Naive thymus-derived CD4-positive, alpha-beta T cell (primary cell): ENCODE measurements at regions of chr7 and their contacts with region 1.

Region 1: DNA sequence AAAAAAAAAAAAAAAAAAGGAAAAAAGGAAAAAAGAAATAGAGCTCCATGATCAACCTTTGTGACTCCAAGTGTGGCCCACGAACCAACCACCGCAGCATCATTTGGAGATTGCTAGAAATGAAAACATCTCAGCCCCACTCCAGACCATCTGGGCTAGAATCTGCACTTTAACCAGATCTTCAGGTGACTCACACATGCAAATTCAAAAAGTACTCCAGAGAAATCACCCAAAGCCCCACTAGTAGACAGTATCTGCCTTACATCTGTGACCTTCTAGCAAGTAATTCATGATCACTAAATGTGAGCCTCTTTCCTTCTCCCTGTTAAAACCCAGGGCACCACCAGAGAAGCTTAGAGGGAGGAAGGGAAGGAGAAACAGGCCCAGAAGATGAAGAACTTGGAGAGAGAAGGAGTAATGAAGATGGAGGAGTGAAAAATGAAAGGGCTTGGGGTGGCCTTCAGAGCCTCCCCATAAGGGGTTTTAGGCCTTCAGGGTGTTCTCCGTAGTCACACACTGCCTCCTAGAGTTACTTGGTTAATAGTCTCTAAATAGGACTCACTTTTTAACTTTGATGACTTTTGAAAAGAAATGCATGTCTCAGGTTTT is 94.0 kb downstream of the SLC37A3 start:
- DNase-seq: peak in 8 of 9 donors; percentile 30 to 75 (median 58)
- ATAC-seq: peak; percentile 93
- H3K4me3 ChIP-seq: no peak overlapping the region
- H3K4me3 Mint-ChIP-seq: peak overlapping the region in 1 of 10 donors; percentile 12
- H3K27ac ChIP-seq: no peak overlapping the region
- H3K27ac Mint-ChIP-seq: peak overlapping the region; percentile 3 to 81 (median 62)
- H3K4me1 ChIP-seq: no peaks in the 10 kb centered on the region
- H3K4me1 Mint-ChIP-seq: peaks cover 0 to 7% (median 6%) of the 10 kb centered on the region in 7 donors
- H3K27me3 ChIP-seq: no peaks in the 10 kb centered on the region
- H3K27me3 Mint-ChIP-seq: no peaks in the 10 kb centered on the region

Region 2: DNA sequence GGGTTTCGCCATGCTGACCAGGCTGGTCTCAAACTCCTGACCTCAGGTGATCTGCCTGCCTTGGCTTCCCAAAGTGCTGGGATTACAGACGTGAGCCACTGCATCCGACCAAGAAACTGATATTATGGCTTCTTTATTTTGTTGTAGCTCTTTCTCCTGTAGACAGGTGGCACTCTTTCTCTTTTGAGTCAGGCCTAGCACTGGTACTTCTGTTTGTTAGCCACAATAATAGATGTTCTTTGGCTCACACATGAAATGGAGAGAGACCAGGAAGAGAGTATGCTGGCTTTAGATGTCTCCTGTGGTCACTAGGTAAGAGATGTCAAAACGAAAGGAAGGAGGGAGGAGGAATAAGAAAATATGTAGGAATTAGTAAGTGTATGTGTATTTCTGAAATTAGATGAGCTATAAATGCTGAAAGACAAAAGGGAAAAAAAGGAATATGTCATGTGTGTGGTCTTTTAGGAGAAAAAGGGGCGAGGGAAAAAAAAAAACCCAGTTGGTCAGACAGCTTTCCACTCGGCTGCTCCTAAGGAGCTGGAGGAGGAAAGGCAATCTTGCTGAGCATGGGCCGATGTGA is 702.1 kb before region 1 on chr7:
- CTCF ChIA-PET with region 1: no interaction called
- POLR2A ChIA-PET with region 1: no interaction called
- intact Hi-C with region 1: loop called in 1 of 2 experiments (anchors 1 kb)
- DNase-seq: peak in 6 of 9 donors; percentile 16 to 46 (median 44)
- ATAC-seq: peak; percentile 73
- H3K4me3 ChIP-seq: no peak overlapping the region
- H3K4me3 Mint-ChIP-seq: no peak overlapping the region
- H3K27ac ChIP-seq: no peak overlapping the region
- H3K27ac Mint-ChIP-seq: no peak overlapping the region
- H3K4me1 ChIP-seq: no peaks in the 10 kb centered on the region
- H3K4me1 Mint-ChIP-seq: peaks cover 0 to 3% (median 0%) of the 10 kb centered on the region in 7 donors
- H3K27me3 ChIP-seq: no peaks in the 10 kb centered on the region
- H3K27me3 Mint-ChIP-seq: no peaks in the 10 kb centered on the region

Region 3: GRCh38 chr7:140036224-140036962 is 267.9 kb before region 1 on chr7:
- CTCF ChIA-PET with region 1: no interaction called
- POLR2A ChIA-PET with region 1: no interaction called
- intact Hi-C with region 1: no loop called
- DNase-seq: no peak
- ATAC-seq: peak; percentile 45
- H3K4me3 ChIP-seq: no peak overlapping the region
- H3K4me3 Mint-ChIP-seq: peak overlapping the region in 6 of 10 donors; percentile 5 to 52 (median 42)
- H3K27ac ChIP-seq: no peak overlapping the region
- H3K27ac Mint-ChIP-seq: peak overlapping the region in 6 of 9 donors; percentile 2 to 71 (median 51)
- H3K4me1 ChIP-seq: peaks cover 5% of the 10 kb centered on the region in 2 donors
- H3K4me1 Mint-ChIP-seq: peaks cover 13 to 65% (median 35%) of the 10 kb centered on the region in 7 donors
- H3K27me3 ChIP-seq: no peaks in the 10 kb centered on the region
- H3K27me3 Mint-ChIP-seq: no peaks in the 10 kb centered on the region

Region 4: GRCh38 chr7:140238778-140239652 is 65.3 kb before region 1 on chr7:
- CTCF ChIA-PET with region 1: interaction called, 3 read pairs
- POLR2A ChIA-PET with region 1: interaction called, 3 read pairs
- intact Hi-C with region 1: loop called in 1 of 2 experiments (anchors 1 kb)
- DNase-seq: no peak
- ATAC-seq: no peak
- H3K4me3 ChIP-seq: no peak overlapping the region
- H3K4me3 Mint-ChIP-seq: no peak overlapping the region
- H3K27ac ChIP-seq: no peak overlapping the region
- H3K27ac Mint-ChIP-seq: peak overlapping the region in 1 of 9 donors; percentile 41
- H3K4me1 ChIP-seq: no peaks in the 10 kb centered on the region
- H3K4me1 Mint-ChIP-seq: peaks cover 0 to 25% (median 13%) of the 10 kb centered on the region in 7 donors
- H3K27me3 ChIP-seq: no peaks in the 10 kb centered on the region
- H3K27me3 Mint-ChIP-seq: no peaks in the 10 kb centered on the region

Region 5: DNA sequence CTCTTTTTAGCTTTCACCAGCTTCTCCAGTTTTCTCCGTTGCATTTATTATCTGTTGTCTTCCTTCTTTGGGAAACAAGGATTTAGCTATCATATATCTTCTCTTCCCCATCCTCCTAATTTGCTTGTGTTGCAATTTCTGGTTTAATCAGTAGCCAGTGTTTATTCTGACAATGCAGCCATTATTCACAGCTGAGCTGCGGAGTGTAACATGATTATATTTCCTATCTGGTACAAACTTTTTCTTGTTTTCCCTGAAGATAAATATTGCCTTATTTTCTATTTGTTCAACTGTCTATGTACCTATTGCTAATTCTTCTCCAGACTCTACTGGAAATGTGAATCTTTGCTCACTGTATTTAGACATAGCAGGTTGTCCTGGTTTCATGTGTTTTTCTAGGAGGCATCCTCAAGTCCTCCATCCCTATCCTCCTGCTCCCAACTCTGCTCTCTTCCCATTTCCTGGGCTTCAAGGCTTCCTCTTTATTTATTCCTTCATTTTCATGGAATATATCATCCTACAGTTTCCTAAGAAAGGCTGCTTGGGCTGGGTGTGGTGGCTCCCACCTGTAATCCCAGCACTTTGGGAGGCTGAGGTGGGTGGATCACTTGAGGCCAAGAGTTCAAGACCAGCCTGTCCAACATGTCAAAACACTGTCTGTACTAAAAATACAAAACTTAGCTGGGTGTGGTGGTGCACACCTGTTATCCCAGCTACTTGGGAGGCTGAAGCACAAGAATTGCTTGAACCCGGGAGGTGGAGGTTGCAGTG is 55.1 kb before region 1 on chr7:
- CTCF ChIA-PET with region 1: no interaction called
- POLR2A ChIA-PET with region 1: no interaction called
- intact Hi-C with region 1: loop called in 1 of 2 experiments (anchors 5 kb)
- DNase-seq: no peak
- ATAC-seq: no peak
- H3K4me3 ChIP-seq: no peak overlapping the region
- H3K4me3 Mint-ChIP-seq: no peak overlapping the region
- H3K27ac ChIP-seq: no peak overlapping the region
- H3K27ac Mint-ChIP-seq: no peak overlapping the region
- H3K4me1 ChIP-seq: peaks cover 0 to 21% of the 10 kb centered on the region in 2 donors
- H3K4me1 Mint-ChIP-seq: peaks cover 0 to 34% (median 5%) of the 10 kb centered on the region in 7 donors
- H3K27me3 ChIP-seq: no peaks in the 10 kb centered on the region
- H3K27me3 Mint-ChIP-seq: no peaks in the 10 kb centered on the region

Region 6: GRCh38 chr7:140260352-140261104 is 43.8 kb before region 1 on chr7:
- CTCF ChIA-PET with region 1: interaction called, 7 read pairs
- POLR2A ChIA-PET with region 1: interaction called, 5 read pairs
- intact Hi-C with region 1: loop called in 1 of 2 experiments (anchors 5 kb)
- DNase-seq: no peak
- ATAC-seq: no peak
- H3K4me3 ChIP-seq: no peak overlapping the region
- H3K4me3 Mint-ChIP-seq: peak overlapping the region in 1 of 10 donors; percentile 7
- H3K27ac ChIP-seq: no peak overlapping the region
- H3K27ac Mint-ChIP-seq: peak overlapping the region in 5 of 9 donors; percentile 41 to 89 (median 74)
- H3K4me1 ChIP-seq: peaks cover 18 to 29% of the 10 kb centered on the region in 2 donors
- H3K4me1 Mint-ChIP-seq: peaks cover 29 to 58% (median 47%) of the 10 kb centered on the region in 7 donors
- H3K27me3 ChIP-seq: no peaks in the 10 kb centered on the region
- H3K27me3 Mint-ChIP-seq: peaks cover 0 to 4% (median 0%) of the 10 kb centered on the region in 5 donors

Region 7: DNA sequence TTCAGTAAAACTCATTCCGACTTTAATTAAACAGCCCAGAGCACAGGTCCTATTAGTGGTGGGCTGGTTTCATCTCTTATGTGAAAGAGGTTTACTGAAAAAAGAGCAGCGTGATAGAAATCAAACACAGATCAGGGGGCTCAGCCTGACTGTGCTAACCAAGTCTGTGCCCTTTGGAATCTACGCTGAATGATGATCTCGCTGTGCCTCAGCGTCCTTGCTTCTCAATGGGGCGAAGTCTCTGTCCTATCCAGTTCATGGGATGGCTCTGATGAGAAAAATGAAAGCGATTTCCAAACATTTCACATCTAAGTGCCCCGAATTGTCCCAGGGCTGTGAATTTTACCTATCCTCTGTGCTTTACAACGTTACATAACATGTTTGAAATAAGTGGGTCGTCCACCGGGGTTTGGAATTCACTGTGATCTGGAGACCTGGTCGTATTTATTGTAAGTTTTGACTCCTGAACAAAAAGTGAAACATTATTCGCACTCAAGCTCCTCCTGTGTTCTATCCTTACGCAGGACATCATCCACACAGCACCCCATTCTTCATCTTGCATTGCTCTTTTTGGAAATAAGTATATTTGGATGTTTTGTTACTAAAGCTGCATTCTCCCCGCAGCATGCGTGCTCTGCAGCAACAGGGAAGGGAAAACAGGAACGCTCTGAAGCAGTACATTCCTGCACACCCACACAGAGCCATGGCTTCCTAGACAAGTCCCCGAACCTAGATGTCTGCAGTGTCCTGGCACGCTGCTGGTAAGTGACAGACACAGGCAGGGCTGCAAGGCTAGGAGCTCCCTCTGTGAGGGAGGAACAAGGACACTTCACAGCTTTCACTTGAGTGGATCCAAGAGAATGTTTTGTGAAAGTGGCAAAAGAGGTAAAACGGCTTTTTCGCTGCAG is 10.5 kb after region 1 on chr7:
- CTCF ChIA-PET with region 1: no interaction called
- POLR2A ChIA-PET with region 1: no interaction called
- intact Hi-C with region 1: no loop called
- DNase-seq: no peak
- ATAC-seq: no peak
- H3K4me3 ChIP-seq: no peak overlapping the region
- H3K4me3 Mint-ChIP-seq: no peak overlapping the region
- H3K27ac ChIP-seq: no peak overlapping the region
- H3K27ac Mint-ChIP-seq: peak overlapping the region in 1 of 9 donors; percentile 20
- H3K4me1 ChIP-seq: no peaks in the 10 kb centered on the region
- H3K4me1 Mint-ChIP-seq: peaks cover 0 to 46% (median 4%) of the 10 kb centered on the region in 7 donors
- H3K27me3 ChIP-seq: no peaks in the 10 kb centered on the region
- H3K27me3 Mint-ChIP-seq: peaks cover 0 to 4% (median 0%) of the 10 kb centered on the region in 5 donors